ENCODE measurements at regions of chr3 and their contacts with region 1.

Region 1: DNA sequence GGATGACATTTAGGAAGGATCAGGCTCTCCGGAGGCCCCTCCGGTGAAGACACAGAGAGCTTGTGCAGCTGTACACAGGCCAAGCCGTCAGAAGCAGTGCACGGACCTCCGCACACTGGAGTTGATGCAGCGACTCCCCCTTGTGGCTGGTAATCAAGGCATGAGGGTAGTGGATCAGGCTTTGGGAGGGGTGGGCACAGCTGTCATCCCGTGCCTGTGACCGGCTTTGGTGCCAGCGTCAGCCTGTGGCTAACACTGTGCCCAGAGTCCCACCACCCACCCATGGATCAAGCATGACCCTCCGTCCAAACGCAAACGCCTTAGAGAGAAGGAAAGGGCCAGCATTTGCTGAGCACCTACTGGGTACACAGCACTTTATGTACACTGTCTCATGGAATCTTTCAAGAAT is 8.2 kb upstream of the GRIP2 start:
- DNase-seq: peak in 5 of 9 donors; percentile 21 to 33 (median 22)
- ATAC-seq: peak; percentile 47
- H3K4me3 ChIP-seq: no peak overlapping the region
- H3K4me3 Mint-ChIP-seq: no peak overlapping the region
- H3K27ac ChIP-seq: no peak overlapping the region
- H3K27ac Mint-ChIP-seq: no peak overlapping the region
- H3K4me1 ChIP-seq: no peaks in the 10 kb centered on the region
- H3K4me1 Mint-ChIP-seq: peaks cover 0 to 8% (median 0%) of the 10 kb centered on the region in 7 donors
- H3K27me3 ChIP-seq: no peaks in the 10 kb centered on the region
- H3K27me3 Mint-ChIP-seq: peaks cover 18 to 57% (median 41%) of the 10 kb centered on the region in 5 donors

Region 2: GRCh38 chr3:13177641-13178040 is 1370.7 kb before region 1 on chr3:
- CTCF ChIA-PET with region 1: no interaction called
- POLR2A ChIA-PET with region 1: no interaction called
- intact Hi-C with region 1: no loop called
- DNase-seq: no peak
- ATAC-seq: no peak
- H3K4me3 ChIP-seq: no peak overlapping the region
- H3K4me3 Mint-ChIP-seq: no peak overlapping the region
- H3K27ac ChIP-seq: no peak overlapping the region
- H3K27ac Mint-ChIP-seq: no peak overlapping the region
- H3K4me1 ChIP-seq: no peaks in the 10 kb centered on the region
- H3K4me1 Mint-ChIP-seq: no peaks in the 10 kb centered on the region
- H3K27me3 ChIP-seq: no peaks in the 10 kb centered on the region
- H3K27me3 Mint-ChIP-seq: peaks cover 0 to 5% (median 0%) of the 10 kb centered on the region in 5 donors

Region 3: GRCh38 chr3:14203521-14204079 is 344.7 kb before region 1 on chr3:
- CTCF ChIA-PET with region 1: interaction called, 3 read pairs
- POLR2A ChIA-PET with region 1: no interaction called
- intact Hi-C with region 1: loop called in 1 of 2 experiments (anchors 1 kb)
- DNase-seq: peak in 6 of 9 donors; percentile 27 to 41 (median 33)
- ATAC-seq: peak; percentile 80
- H3K4me3 ChIP-seq: no peak overlapping the region
- H3K4me3 Mint-ChIP-seq: no peak overlapping the region
- H3K27ac ChIP-seq: no peak overlapping the region
- H3K27ac Mint-ChIP-seq: peak overlapping the region in 4 of 9 donors; percentile 12 to 83 (median 55)
- H3K4me1 ChIP-seq: peaks cover 0 to 5% of the 10 kb centered on the region in 2 donors
- H3K4me1 Mint-ChIP-seq: peaks cover 0 to 7% (median 5%) of the 10 kb centered on the region in 7 donors
- H3K27me3 ChIP-seq: no peaks in the 10 kb centered on the region
- H3K27me3 Mint-ChIP-seq: no peaks in the 10 kb centered on the region

Region 4: DNA sequence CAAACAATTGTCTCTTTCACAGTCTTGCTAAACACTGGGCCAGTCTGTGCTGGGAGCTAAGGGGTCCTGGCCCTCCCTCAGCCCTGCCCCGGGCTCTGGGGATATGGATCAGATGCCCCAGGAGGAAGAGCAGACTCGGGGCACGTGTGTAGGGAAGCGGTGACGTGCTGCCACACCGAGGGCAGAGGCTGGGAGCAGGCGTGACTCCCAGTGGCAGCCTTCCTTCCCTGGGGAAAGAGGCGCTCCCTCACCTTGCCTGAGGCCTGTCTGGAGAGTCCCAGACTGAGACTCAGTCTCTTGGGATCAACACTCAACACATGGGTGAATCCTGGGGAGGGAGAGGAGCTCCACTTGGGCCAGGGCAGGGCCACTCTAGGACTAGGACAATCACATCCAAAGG is 45.9 kb after region 1 on chr3:
- CTCF ChIA-PET with region 1: no interaction called
- POLR2A ChIA-PET with region 1: no interaction called
- intact Hi-C with region 1: no loop called
- DNase-seq: no peak
- ATAC-seq: no peak
- H3K4me3 ChIP-seq: no peak overlapping the region
- H3K4me3 Mint-ChIP-seq: no peak overlapping the region
- H3K27ac ChIP-seq: no peak overlapping the region
- H3K27ac Mint-ChIP-seq: no peak overlapping the region
- H3K4me1 ChIP-seq: no peaks in the 10 kb centered on the region
- H3K4me1 Mint-ChIP-seq: peaks cover 0 to 10% (median 0%) of the 10 kb centered on the region in 7 donors
- H3K27me3 ChIP-seq: peaks cover 0 to 2% of the 10 kb centered on the region in 2 donors
- H3K27me3 Mint-ChIP-seq: peaks cover 19 to 59% (median 54%) of the 10 kb centered on the region in 5 donors